PC-3 (cell line): ENCODE measurements at regions of chr2 and their contacts with region 1.

Region 1: DNA sequence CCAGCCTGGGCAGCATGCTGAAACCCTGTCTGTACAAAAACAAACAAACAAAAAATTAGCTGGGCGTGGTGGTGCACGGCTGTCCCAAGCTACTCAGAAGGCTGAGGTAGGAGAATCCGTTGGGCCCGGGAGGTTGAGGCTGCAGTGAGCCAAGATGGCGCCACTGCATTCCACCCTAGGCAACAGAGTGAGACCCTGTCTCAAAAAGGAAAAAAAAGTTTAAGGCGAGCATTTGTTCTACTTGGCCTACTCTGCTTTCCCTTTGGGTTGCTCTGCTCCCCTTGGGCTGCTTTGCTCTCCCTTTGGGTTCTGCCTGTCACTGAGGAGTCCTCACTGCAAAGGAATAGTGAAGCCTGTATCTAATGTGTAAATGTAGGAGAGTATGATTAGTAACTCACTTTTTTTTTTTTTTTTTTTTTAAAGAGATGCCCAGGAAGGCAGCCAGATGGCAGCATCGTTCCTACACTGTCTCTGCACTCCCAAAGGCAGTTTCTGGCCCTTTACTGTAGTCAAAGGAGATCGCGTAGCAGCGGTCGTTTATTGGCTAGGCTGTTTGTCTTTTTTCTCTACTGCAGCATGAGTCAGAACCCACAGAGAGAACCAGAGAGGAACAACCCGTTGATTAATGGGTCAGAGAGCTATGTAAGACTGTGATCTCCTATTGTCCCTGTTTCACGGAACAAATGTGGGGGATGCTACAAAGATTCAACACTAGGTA is 118.3 kb upstream of the CWC22 start:
- DNase-seq: peak; percentile 97
- ATAC-seq: peak; percentile 92
- H3K4me3 ChIP-seq: peak overlapping the region; percentile 17; the same call in 1 of the 2 replicates
- H3K27ac ChIP-seq: peak overlapping the region; percentile 25
- H3K4me1 ChIP-seq: peaks cover 18% of the 10 kb centered on the region
- H3K27me3 ChIP-seq: no peaks in the 10 kb centered on the region
- CTCF ChIP-seq: peak; percentile 80

Region 2: GRCh38 chr2:179917272-179917671 is 208.1 kb before region 1 on chr2:
- CTCF ChIA-PET with region 1: no interaction called
- POLR2A ChIA-PET with region 1: no interaction called
- intact Hi-C with region 1: no loop called
- DNase-seq: peak; percentile 80
- ATAC-seq: peak; percentile 89
- H3K4me3 ChIP-seq: no peak overlapping the region
- H3K27ac ChIP-seq: no peak overlapping the region
- H3K4me1 ChIP-seq: peaks cover 6% of the 10 kb centered on the region
- H3K27me3 ChIP-seq: no peaks in the 10 kb centered on the region
- CTCF ChIP-seq: no peak

Region 3: GRCh38 chr2:180240774-180241173 is 115.4 kb after region 1 on chr2:
- CTCF ChIA-PET with region 1: interaction called, 3 read pairs
- POLR2A ChIA-PET with region 1: no interaction called
- intact Hi-C with region 1: loop called (anchors 2 kb)
- DNase-seq: peak; percentile 65
- ATAC-seq: peak; percentile 59; the same call in 1 of the 2 replicates
- H3K4me3 ChIP-seq: no peak overlapping the region
- H3K27ac ChIP-seq: no peak overlapping the region
- H3K4me1 ChIP-seq: no peaks in the 10 kb centered on the region
- H3K27me3 ChIP-seq: no peaks in the 10 kb centered on the region
- CTCF ChIP-seq: peak; percentile 71

Region 4: GRCh38 chr2:180367815-180368214 is 242.4 kb after region 1 on chr2:
- CTCF ChIA-PET with region 1: no interaction called
- POLR2A ChIA-PET with region 1: no interaction called
- intact Hi-C with region 1: loop called (anchors 5 kb)
- DNase-seq: peak; percentile 68
- ATAC-seq: peak; percentile 93
- H3K4me3 ChIP-seq: no peak overlapping the region
- H3K27ac ChIP-seq: peak overlapping the region; percentile 71
- H3K4me1 ChIP-seq: peaks cover 25% of the 10 kb centered on the region
- H3K27me3 ChIP-seq: no peaks in the 10 kb centered on the region
- CTCF ChIP-seq: no peak

Region 5: GRCh38 chr2:180699657-180700361 is 574.4 kb after region 1 on chr2:
- CTCF ChIA-PET with region 1: interaction called, 7 read pairs
- POLR2A ChIA-PET with region 1: no interaction called
- intact Hi-C with region 1: loop called (anchors 10 kb)
- DNase-seq: no peak
- ATAC-seq: peak; percentile 69
- H3K4me3 ChIP-seq: no peak overlapping the region
- H3K27ac ChIP-seq: no peak overlapping the region
- H3K4me1 ChIP-seq: peaks cover 24% of the 10 kb centered on the region
- H3K27me3 ChIP-seq: no peaks in the 10 kb centered on the region
- CTCF ChIP-seq: no peak

Region 6: DNA sequence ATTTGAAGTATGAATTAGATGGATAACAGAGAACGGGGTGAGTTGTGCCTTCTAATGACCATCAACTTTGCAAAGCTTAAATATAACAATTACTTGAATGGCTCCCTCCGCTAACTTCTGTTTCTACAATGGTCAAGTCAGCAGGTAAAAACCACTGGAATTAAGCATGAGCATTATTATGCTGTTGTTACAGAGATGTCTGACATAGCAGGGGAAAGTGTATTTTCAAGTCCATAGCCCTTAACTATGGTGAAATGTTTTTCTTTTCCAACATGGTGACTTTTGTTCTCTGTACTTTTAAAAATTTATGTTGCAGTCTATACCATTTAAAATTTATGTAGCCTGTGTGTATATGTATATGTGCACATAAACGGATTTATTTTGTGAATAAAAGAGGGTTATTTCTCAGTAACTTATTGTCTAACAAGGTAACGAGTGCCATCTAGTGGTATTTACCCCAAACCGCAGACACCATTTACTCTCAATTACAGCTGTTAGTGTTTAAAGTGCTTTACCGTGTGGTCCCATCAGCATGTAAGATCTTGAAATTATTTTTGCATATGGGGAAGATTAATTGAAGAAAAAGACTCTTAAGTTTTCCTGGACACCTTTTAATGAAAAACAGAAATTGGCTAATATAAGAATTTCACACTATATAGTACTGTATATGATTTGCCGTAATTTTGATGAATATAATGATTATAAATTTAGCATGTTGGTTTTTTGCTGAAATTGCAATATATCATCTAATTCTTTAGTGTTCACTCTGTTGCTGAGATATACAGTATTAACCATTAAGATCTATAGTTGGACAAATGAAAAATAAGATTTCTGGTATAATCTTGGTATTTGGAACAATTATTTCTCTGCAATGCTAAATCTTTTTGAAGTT is 933.2 kb after region 1 on chr2:
- CTCF ChIA-PET with region 1: interaction called, 4 read pairs
- POLR2A ChIA-PET with region 1: no interaction called
- intact Hi-C with region 1: loop called (anchors 1 kb)
- DNase-seq: peak; percentile 72
- ATAC-seq: 0 out of 2 replicates have a peak, but pooled peaks have one; percentile 25
- H3K4me3 ChIP-seq: no peak overlapping the region
- H3K27ac ChIP-seq: no peak overlapping the region
- H3K4me1 ChIP-seq: peaks cover 7% of the 10 kb centered on the region; the same call in 1 of the 2 replicates
- H3K27me3 ChIP-seq: no peaks in the 10 kb centered on the region
- CTCF ChIP-seq: peak; percentile 93

Region 7: DNA sequence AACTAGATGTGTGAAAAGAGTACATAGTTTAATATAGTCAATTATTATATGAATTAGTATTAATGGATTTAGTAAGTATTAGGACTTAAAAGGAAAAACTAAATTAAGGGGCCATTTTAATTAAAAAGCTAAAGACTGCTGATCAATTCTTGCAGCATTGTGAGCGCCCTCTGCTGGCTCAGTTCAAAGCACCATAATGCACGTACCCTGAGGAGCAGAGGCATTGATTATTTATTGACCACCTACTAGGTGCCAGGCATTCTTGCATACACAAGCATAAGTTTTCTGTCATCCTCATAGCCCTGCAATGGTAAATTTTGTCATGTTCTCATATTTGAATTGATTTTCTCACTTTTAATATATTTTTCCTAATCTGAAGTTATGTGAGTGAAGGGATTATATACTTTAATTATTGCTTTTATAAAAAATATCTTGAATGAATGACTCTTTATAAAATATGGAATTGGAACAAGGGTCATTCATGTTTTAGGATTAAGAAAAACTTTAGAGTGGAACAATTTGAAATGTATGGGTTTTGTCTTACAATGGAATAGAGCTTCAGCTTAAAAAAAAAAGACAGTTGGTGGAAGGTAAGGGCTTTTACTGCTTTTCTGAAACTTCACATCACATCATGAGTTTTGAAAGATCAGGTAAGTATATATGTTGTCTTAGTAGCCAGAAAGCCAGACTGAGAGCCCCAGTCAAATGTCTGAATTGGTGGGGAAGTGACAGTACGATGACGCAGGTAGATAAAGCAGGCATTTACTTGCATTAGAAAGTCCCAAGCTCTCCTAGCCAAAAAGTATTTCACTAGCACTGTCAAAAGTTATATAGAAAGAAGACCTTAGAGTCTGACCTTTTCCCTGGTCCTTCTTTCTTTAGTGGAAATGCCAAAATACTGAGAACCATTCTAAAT is 1341.5 kb after region 1 on chr2:
- CTCF ChIA-PET with region 1: no interaction called
- POLR2A ChIA-PET with region 1: no interaction called
- intact Hi-C with region 1: loop called (anchors 1 kb)
- DNase-seq: peak; percentile 67
- ATAC-seq: peak; percentile 50; the same call in 1 of the 2 replicates
- H3K4me3 ChIP-seq: no peak overlapping the region
- H3K27ac ChIP-seq: no peak overlapping the region
- H3K4me1 ChIP-seq: peaks cover 15% of the 10 kb centered on the region
- H3K27me3 ChIP-seq: no peaks in the 10 kb centered on the region
- CTCF ChIP-seq: peak; percentile 86